AG04450 (cell line): ENCODE measurements at regions of chr4 and their contacts with region 1.

Region 1: DNA sequence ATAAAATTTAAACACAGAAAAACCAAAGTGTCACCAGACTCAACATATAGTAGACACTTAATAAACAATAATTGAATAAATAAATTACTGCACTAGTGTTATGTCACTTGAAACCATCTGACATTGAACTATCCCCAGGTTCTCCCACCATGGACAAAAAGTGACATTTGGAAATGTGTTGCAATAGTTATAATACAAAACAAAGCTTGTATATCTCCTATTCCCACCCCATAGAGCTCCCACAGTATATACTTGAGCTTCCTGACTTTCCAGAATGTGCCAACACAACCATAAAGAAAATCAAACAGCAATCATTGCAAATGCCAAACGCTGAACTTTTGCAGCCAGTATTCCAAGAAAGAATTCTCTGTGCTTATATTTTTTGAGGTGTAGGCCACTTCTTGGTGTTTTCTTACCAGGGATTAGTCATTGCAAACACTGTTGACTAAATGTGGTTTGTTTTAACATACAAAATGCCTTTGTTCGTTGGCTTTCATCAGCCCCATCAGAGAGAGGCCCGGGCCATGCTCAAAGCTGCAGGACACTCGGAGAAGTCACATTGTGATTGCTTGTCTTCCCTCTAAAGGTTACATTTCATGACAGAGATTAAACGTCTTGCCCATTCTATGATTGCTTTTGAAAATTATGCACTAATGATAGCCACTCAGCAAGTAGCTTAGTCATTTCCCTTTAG is 33.8 kb downstream of the PPARGC1A start:
- DNase-seq: no peak
- H3K4me3 ChIP-seq: no peak overlapping the region
- H3K27ac ChIP-seq: no peak overlapping the region
- H3K27me3 ChIP-seq: no peaks in the 10 kb centered on the region
- CTCF ChIP-seq: no peak

Region 2: DNA sequence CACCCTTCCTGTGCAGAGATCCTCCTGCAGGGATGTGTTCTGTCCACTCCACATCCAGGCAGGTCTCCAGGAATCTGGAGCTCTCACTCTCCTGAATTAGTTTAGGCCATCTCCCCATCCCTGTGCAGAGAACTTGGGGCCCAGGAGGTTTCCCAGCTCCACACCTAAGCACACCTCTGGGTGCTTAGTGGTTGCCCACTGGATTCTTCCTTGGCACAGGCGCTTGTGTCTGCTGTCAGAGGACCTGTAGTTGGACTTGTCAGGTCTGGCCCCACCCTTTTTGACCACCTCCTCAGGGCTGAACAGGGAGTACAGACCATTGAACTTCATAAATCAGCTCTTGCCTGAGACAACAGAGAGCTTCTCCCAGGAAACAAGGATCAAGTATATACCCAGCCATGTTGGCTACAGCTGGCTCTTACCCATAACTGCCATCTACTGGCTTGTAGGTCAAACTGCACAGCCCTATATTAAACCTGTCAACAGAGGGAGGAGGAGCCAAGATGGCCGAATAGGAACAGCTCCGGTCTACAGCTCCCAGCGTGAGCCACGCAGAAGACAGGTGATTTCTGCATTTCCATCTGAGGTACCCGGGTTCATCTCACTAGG is 241.7 kb before region 1 on chr4:
- CTCF ChIA-PET with region 1: no interaction called
- POLR2A ChIA-PET with region 1: no interaction called
- DNase-seq: no peak
- H3K4me3 ChIP-seq: no peak overlapping the region
- H3K27ac ChIP-seq: no peak overlapping the region
- H3K27me3 ChIP-seq: no peaks in the 10 kb centered on the region
- CTCF ChIP-seq: 0 out of 2 replicates have a peak, but pooled peaks have one; percentile 10

Region 3: GRCh38 chr4:23819041-23819511 is 37.0 kb before region 1 on chr4:
- CTCF ChIA-PET with region 1: no interaction called
- POLR2A ChIA-PET with region 1: interaction called, 14 read pairs
- DNase-seq: no peak
- H3K4me3 ChIP-seq: no peak overlapping the region
- H3K27ac ChIP-seq: no peak overlapping the region
- H3K27me3 ChIP-seq: no peaks in the 10 kb centered on the region
- CTCF ChIP-seq: no peak